OCI-LY7 (cell line): ENCODE measurements at regions of chr21 and their contacts with region 1.

Region 1: GRCh38 chr21:29511096-29511495 is 212.4 kb downstream of the BACH1 start:
- DNase-seq: no peak
- H3K4me3 ChIP-seq: no peak overlapping the region
- H3K27ac ChIP-seq: no peak overlapping the region
- H3K4me1 ChIP-seq: no peaks in the 10 kb centered on the region
- CTCF ChIP-seq: no peak

Region 2: DNA sequence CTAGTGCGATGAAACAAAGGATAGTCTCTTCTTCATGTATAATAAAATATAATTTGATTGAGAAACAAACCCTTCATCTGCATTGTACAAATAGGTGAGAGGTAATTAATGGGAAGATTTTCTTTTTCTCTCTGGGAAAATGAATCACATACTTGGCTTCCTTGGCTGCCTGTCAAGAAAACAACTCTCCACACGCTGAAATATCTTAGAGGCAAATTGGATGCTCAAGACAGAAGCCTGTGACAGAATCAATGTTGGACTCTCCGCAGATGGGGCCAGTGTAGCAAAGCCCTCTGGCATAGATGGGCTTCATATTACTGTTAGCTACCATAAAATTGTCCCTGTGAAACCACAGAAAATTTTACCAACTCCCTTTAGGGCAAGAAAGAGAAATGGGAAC is 242.1 kb after region 1 on chr21:
- CTCF ChIA-PET with region 1: no interaction called
- POLR2A ChIA-PET with region 1: interaction called, 11 read pairs
- intact Hi-C with region 1: no loop called
- DNase-seq: no peak
- H3K4me3 ChIP-seq: no peak overlapping the region
- H3K27ac ChIP-seq: no peak overlapping the region
- H3K4me1 ChIP-seq: no peaks in the 10 kb centered on the region
- CTCF ChIP-seq: no peak